Panc1 (cell line): ENCODE measurements at regions of chr6 and their contacts with region 1.

Region 1: GRCh38 chr6:56131435-56131834 is 115.9 kb downstream of the COL21A1 start:
- DNase-seq: no peak
- ATAC-seq: no peak
- H3K4me3 ChIP-seq: no peak overlapping the region
- H3K27ac ChIP-seq: no peak overlapping the region
- H3K4me1 ChIP-seq: no peaks in the 10 kb centered on the region
- H3K27me3 ChIP-seq: no peaks in the 10 kb centered on the region
- CTCF ChIP-seq: no peak

Region 2: DNA sequence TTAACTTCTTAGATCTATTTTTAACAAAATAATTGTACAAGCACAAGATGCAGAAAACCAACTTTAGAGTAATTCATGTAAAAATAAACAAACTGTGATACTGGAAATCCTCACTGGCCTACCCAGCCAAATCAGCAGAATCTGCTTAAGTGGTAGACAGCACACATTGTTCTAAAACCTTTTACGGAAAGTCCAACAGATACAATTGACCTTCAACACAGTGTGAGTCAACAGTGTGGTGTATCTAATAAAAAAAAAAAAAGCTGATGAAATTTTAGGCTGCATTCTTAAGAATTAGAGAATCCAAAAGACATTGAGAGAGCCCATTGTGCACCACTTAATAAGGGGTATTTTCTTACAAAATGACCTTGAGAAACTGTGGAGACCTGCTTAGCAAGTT is 58.6 kb before region 1 on chr6:
- CTCF ChIA-PET with region 1: no interaction called
- POLR2A ChIA-PET with region 1: no interaction called
- in situ Hi-C with region 1: no loop called
- intact Hi-C with region 1: loop called (anchors 10 kb)
- DNase-seq: no peak
- ATAC-seq: no peak
- H3K4me3 ChIP-seq: no peak overlapping the region
- H3K27ac ChIP-seq: no peak overlapping the region
- H3K4me1 ChIP-seq: no peaks in the 10 kb centered on the region
- H3K27me3 ChIP-seq: no peaks in the 10 kb centered on the region
- CTCF ChIP-seq: no peak